ENCODE measurements at regions of chr3 and their contacts with region 1.

Region 1: DNA sequence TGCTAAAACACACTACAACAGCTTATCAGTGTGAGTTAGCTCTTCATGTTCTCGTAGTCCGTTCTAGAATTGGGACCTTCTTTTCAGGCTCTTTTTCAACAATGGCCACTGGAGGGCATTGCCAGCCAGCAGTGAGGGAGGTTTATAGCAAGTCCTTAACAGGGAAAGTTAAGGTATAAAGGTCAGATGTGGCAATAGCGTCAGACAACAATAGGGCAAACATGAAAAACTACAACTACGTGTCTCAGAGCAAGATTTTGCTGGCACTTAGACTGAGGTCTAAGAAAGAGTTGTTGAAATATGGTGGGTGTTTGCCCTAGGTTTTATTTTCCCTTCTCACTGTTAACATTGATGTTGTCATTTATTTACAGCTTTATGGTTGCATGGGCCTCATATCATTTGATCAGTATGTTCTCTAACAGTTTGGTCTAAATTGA is 161.4 kb downstream of the GMNC start:
- DNase-seq: peak; percentile 11 to 17
- ATAC-seq: peak in 7 of 8 donors; percentile 47 to 82 (median 77)
- H3K4me3 ChIP-seq: no peak overlapping the region
- H3K27ac ChIP-seq: no peak overlapping the region
- H3K4me1 ChIP-seq: peaks cover 0 to 17% (median 4%) of the 10 kb centered on the region in 9 donors
- H3K27me3 ChIP-seq: no peaks in the 10 kb centered on the region
- CTCF ChIP-seq: peak in 8 of 9 donors; percentile 25 to 63 (median 52)

Region 2: DNA sequence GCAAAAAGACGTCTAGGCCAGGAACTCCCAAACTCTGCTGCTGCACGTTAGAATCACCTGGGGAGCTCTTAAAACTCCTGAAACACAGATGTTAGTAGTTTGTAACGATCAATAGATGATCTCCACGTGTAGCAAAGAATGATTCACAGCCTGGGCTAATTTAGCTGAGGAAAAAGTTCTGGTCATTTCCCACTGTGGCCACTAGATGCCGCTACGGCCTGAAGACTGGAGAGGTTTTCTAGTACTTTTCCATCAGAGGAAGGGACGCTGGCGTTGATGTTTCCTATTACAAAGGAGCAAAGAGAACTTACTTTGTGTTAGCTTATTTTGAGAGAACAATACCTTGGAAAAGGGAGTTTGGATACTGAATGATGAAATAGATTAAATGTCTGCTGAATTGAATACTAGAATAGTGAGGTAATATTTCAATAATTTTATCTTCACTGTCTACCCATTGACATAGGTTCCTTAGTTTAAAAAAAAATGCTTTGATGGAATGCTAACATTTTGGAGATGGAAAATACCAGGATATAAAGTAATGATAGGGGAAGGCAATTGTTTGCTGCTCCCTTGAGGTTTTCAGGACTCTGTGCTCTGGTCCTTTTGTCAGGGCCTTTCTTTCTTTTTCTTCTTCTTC is 739.5 kb before region 1 on chr3:
- intact Hi-C with region 1: loop called in 5 of 10 experiments (anchors 5 to 10 kb)
- DNase-seq: peak; percentile 60 to 76
- ATAC-seq: peak; percentile 71 to 88 (median 78)
- H3K4me3 ChIP-seq: no peak overlapping the region
- H3K27ac ChIP-seq: peak overlapping the region in 2 of 10 donors; percentile 3 to 19
- H3K4me1 ChIP-seq: peaks cover 0 to 11% (median 5%) of the 10 kb centered on the region in 9 donors
- H3K27me3 ChIP-seq: peaks cover 0 to 19% (median 0%) of the 10 kb centered on the region in 7 donors
- CTCF ChIP-seq: peak; percentile 83 to 96 (median 92)

Region 3: GRCh38 chr3:189975391-189975990 is 725.6 kb before region 1 on chr3:
- intact Hi-C with region 1: no loop called
- DNase-seq: no peak
- ATAC-seq: peak in 2 of 8 donors; percentile 19 to 34
- H3K4me3 ChIP-seq: no peak overlapping the region
- H3K27ac ChIP-seq: no peak overlapping the region
- H3K4me1 ChIP-seq: peaks cover 0 to 13% (median 0%) of the 10 kb centered on the region in 9 donors
- H3K27me3 ChIP-seq: no peaks in the 10 kb centered on the region
- CTCF ChIP-seq: no peak

Region 4: DNA sequence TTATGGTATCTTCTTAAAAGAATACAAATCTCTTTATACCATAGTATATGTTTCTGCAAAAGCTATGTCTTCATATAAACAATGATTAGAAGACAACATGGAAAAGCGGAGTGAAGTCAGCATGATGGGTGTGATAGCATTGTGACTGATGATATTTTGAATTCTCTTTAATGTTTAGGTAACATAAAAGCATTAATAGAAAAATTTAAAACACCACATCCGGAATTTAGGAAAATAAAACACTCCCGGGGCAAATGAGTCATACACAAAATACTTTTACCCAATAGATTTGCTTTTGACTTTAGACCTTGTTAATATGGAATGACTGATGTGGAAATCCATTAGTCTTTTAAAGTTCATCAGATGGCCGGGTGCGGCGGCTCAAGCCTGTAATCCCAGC is 715.2 kb before region 1 on chr3:
- intact Hi-C with region 1: no loop called
- DNase-seq: no peak
- ATAC-seq: no peak
- H3K4me3 ChIP-seq: no peak overlapping the region
- H3K27ac ChIP-seq: no peak overlapping the region
- H3K4me1 ChIP-seq: peaks cover 0 to 22% (median 20%) of the 10 kb centered on the region in 9 donors
- H3K27me3 ChIP-seq: peaks cover 0 to 2% (median 0%) of the 10 kb centered on the region in 7 donors
- CTCF ChIP-seq: no peak

Region 5: DNA sequence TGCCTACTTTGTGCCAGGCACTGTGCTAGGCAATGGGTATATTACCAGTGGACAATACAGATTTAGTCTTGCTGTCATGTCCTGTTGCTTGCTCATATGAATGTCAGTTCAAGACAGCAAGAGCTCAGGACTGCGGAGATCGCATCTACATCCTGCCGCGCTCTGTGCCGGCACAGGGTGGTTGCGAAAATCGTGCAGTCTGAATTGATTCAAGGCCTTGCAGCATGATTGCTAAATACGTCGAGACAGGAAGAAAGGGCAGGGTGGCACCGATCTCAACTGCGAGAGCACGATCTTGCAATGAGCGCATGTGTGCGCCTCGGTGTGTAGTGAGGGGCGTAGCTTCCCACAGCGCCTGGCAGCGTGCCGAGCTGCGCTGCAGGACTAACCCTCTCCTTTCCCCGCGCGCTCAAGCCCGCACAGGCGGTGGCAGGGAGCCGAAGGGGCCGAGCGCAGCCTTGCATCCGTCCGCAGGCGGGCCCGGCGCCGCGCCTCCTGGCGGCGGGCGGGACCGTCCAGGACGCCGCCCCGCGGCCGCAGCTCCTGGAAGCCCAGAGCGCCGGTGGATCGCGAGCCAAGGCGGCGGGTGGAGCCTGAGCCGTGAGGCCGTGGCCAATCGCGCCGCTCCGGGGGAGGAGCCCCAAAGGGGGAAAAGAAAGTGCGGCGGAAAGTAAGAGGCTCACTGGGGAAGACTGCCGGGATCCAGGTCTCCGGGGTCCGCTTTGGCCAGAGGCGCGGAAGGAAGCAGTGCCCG is 187.5 kb before region 1 on chr3 and contains the start of gene IL1RAP:
- intact Hi-C with region 1: loop called in 5 of 10 experiments (anchors 5 to 10 kb)
- DNase-seq: peak; percentile 90 to 92
- ATAC-seq: peak; percentile 97 to 99 (median 99)
- H3K4me3 ChIP-seq: peak within 1 kb of the TSS; percentile 42 to 95 (median 84)
- H3K27ac ChIP-seq: peak within 1 kb of the TSS in 9 of 10 donors; percentile 70 to 93 (median 80)
- H3K4me1 ChIP-seq: peaks cover 0 to 39% (median 10%) of the 10 kb centered on the region in 9 donors
- H3K27me3 ChIP-seq: no peaks in the 10 kb centered on the region
- CTCF ChIP-seq: peak; percentile 55 to 96 (median 85)
- total RNA-seq, gene IL1RAP: 3.9 to 11.9 (median 8.7) TPM

Region 6: DNA sequence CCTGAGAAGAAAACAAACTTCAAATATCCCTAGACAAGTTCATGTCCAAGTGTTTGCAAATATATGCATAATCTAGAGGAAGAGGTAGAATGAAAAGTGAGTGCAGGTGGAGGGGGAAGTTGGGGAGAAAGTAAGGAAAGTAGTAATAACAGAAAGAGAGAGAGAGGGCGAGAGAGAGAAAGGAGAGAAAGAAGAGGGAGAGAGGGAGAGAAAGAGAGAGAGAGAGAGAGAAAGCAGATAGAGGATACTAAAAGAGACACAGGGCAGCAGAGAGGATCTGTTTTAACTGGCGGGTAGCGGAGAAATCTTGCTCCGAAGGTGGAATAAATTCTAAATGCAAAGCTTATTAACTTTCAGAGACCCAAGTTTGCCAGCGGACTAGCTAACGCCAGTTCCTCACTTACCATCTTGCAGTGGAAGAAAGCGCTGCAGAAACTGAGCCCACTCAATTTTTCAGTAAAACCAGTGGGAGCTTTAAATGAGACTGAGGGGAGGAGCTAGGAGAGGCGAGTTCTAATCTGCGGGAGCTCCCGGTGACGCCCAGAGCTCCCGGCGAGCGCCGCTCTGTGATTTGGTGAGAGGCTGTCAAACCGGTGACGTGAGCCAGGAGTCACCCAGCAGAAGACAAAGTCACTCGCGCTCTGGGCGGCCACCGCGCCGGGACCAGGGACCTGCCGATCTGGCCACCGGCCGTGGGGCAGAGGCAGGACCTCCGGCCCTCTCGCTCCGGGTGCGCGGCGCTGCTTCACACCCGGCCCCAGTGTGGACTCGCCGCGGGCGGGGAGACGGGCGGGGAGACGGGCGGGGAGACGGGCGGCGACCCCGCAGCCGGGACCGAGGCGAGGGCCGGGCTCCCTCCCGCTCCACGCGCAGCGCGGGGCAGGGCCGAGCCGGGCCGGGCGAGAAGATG is 161.3 kb after region 1 on chr3 and contains the start of gene GMNC:
- intact Hi-C with region 1: loop called in 1 of 10 experiments (anchors 10 kb)
- DNase-seq: peak; percentile 78 to 86
- ATAC-seq: peak; percentile 95 to 98 (median 97)
- H3K4me3 ChIP-seq: peak within 1 kb of the TSS; percentile 33 to 85 (median 62)
- H3K27ac ChIP-seq: peak within 1 kb of the TSS; percentile 63 to 91 (median 82)
- H3K4me1 ChIP-seq: peaks cover 0 to 5% (median 0%) of the 10 kb centered on the region in 9 donors
- H3K27me3 ChIP-seq: peaks cover 0 to 40% (median 0%) of the 10 kb centered on the region in 7 donors
- CTCF ChIP-seq: peak in 1 of 9 donors; percentile 4
- total RNA-seq, gene GMNC: 0.24 to 3.7 (median 0.64) TPM in 9 of 10 donors, not detected in the other

Region 7: DNA sequence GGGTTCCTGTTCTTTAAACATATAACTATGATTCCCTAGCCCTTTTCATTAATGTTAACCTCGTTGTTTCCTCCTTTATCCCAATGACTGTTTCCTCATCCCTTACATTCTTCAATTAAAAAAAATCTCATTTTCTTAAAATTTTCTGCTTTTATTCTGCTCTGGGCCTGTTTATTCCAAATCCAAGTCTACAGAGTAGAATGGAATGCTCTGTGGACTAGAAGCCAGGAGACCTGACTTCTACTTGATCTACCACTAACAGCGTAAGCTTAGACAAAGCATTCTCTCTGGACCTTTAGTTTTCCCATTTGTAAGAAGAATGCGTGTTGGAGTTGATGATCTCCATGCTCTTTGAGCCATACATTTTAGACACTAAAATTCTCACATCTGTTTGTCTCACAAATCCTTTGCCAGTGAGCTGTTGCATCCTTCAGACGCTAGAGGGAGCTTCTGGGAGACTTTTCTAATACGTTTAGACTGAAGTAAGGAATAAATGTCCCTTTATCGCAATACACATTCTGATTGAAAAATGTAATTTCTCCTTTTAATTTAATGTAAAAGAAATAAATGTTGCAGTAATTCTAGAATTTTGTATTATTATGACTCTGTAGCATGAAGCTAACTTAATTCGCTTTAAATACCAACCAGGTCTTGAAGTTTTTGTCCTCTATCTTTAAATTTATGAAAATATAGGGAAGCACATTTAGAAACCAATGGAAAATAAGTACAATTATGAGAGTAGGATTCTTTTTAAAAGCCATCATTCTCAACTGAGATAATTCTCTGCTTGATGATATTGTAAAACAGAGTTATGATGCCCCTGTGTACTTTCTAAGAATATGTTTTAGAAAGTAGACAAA is 183.1 kb after region 1 on chr3:
- intact Hi-C with region 1: loop called in 1 of 10 experiments (anchors 5 kb)
- DNase-seq: peak in 1 of 2 donors; percentile 29
- ATAC-seq: no peak
- H3K4me3 ChIP-seq: no peak overlapping the region
- H3K27ac ChIP-seq: no peak overlapping the region
- H3K4me1 ChIP-seq: no peaks in the 10 kb centered on the region
- H3K27me3 ChIP-seq: peaks cover 0 to 4% (median 0%) of the 10 kb centered on the region in 7 donors
- CTCF ChIP-seq: peak; percentile 68 to 89 (median 84)

Region 8: GRCh38 chr3:191051037-191051436 is 349.9 kb after region 1 on chr3:
- intact Hi-C with region 1: loop called in 8 of 10 experiments (anchors 2 to 5 kb)
- DNase-seq: no peak
- ATAC-seq: no peak
- H3K4me3 ChIP-seq: no peak overlapping the region
- H3K27ac ChIP-seq: no peak overlapping the region
- H3K4me1 ChIP-seq: no peaks in the 10 kb centered on the region
- H3K27me3 ChIP-seq: no peaks in the 10 kb centered on the region
- CTCF ChIP-seq: peak in 7 of 9 donors; percentile 39 to 66 (median 53)